Sigmoid colon (tissue), 7 donors: ENCODE measurements at regions of chr3 and their contacts with region 1.

Region 1: GRCh38 chr3:119891944-119892721 is 110.2 kb downstream of the NR1I2 start:
- DNase-seq: no peak
- H3K4me3 ChIP-seq: peak overlapping the region in 2 of 4 donors; percentile 10 to 18
- H3K27ac ChIP-seq: peak overlapping the region in 3 of 4 donors; percentile 34 to 55 (median 36)
- H3K4me1 ChIP-seq: peaks cover 0 to 11% (median 0%) of the 10 kb centered on the region in 4 donors
- H3K27me3 ChIP-seq: no peaks in the 10 kb centered on the region
- CTCF ChIP-seq: peak; percentile 58 to 69 (median 58)
- EP300 ChIP-seq: no peak
- POLR2A ChIP-seq: no peak

Region 2: DNA sequence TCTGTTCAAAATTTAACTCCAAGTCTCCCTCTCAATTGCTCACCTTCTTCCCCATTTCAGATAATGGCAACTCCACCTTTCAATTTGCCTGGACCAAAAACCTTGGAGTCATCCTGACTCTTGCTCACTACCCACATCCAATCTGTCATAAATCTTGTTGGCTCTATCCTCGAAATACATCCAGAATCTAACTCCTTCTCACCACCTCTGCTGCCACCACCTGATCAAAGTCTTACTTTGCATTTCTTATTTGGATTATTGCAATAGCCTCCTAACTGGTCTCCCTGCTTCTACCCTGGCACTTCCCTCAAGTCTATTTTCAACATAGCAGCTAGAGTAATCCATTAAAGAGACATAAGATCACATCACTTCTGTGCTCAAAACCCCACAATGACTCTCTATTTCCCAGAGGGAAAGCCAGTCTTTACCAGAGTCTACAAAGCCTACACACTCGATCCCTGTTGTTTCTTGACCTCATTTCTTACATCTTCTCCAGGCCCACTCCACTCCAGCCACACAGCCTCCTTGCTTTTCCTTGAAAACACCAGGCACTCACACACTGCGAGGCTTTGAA is 306.3 kb after region 1 on chr3:
- intact Hi-C with region 1: loop called (anchors 5 kb)
- DNase-seq: no peak
- H3K4me3 ChIP-seq: no peak overlapping the region
- H3K27ac ChIP-seq: no peak overlapping the region
- H3K4me1 ChIP-seq: peaks cover 0 to 12% (median 10%) of the 10 kb centered on the region in 4 donors
- H3K27me3 ChIP-seq: no peaks in the 10 kb centered on the region
- CTCF ChIP-seq: no peak
- EP300 ChIP-seq: no peak
- POLR2A ChIP-seq: no peak